IMR-90 (cell line): ENCODE measurements at regions of chr7 and their contacts with region 1.

Region 1: GRCh38 chr7:47581806-47582763 is at the start of gene TNS3:
- DNase-seq: peak; percentile 36
- ATAC-seq: peak; percentile 73
- H3K4me3 ChIP-seq: peak within 1 kb of the TSS; percentile 79
- H3K27ac ChIP-seq: peak within 1 kb of the TSS; percentile 77
- H3K4me1 ChIP-seq: peaks cover 33% of the 10 kb centered on the region
- H3K27me3 ChIP-seq: no peaks in the 10 kb centered on the region
- CTCF ChIP-seq: peak; percentile 47
- POLR2A ChIP-seq: peak; percentile 64; the same call in 1 of the 2 replicates
- RAD21 ChIP-seq: peak; percentile 34
- total RNA-seq, gene TNS3: 58.9 and 64.3 TPM in 2 replicates

Region 2: GRCh38 chr7:46802479-46802878 is 779.6 kb before region 1 on chr7:
- CTCF ChIA-PET with region 1: no interaction called
- POLR2A ChIA-PET with region 1: no interaction called
- dilution Hi-C with region 1: no loop called
- in situ Hi-C with region 1: no loop called
- intact Hi-C with region 1: no loop called
- DNase-seq: no peak
- ATAC-seq: no peak
- H3K4me3 ChIP-seq: no peak overlapping the region
- H3K27ac ChIP-seq: no peak overlapping the region
- H3K4me1 ChIP-seq: no peaks in the 10 kb centered on the region
- H3K27me3 ChIP-seq: no peaks in the 10 kb centered on the region
- CTCF ChIP-seq: no peak
- POLR2A ChIP-seq: no peak
- RAD21 ChIP-seq: no peak

Region 3: DNA sequence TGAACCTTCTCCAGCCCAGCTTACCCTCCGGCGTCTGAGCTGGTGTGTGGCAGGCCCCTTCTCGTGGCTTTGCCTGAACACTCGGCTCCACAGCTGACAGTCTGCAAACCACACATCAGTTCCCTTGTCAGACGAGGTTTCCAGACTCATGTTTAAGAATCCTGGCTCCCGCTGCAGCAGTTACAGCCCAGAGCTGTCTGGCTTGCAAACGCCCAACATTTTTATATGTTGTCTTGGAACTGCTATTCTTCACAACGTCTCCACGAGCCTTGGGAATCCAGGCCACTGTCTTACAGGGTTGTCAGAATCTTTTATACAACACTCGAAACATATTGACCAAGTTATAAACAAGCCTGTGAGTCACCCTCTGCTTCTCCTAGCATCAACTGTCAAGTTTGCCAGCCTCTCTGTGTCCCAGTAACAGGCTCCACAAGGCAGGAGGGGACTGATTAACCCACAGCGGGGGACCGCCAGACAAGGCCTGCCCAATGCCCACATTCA is 68.3 kb before region 1 on chr7:
- CTCF ChIA-PET with region 1: no interaction called
- POLR2A ChIA-PET with region 1: no interaction called
- dilution Hi-C with region 1: no loop called
- in situ Hi-C with region 1: no loop called
- intact Hi-C with region 1: loop called (anchors 2 kb)
- DNase-seq: peak; percentile 93
- ATAC-seq: peak; percentile 92
- H3K4me3 ChIP-seq: no peak overlapping the region
- H3K27ac ChIP-seq: peak overlapping the region; percentile 27
- H3K4me1 ChIP-seq: peaks cover 25% of the 10 kb centered on the region
- H3K27me3 ChIP-seq: no peaks in the 10 kb centered on the region
- CTCF ChIP-seq: no peak
- POLR2A ChIP-seq: no peak
- RAD21 ChIP-seq: peak; percentile 0

Region 4: GRCh38 chr7:47600199-47601118 is 18.4 kb after region 1 on chr7:
- CTCF ChIA-PET with region 1: no interaction called
- POLR2A ChIA-PET with region 1: interaction called, 9 read pairs
- dilution Hi-C with region 1: no loop called
- in situ Hi-C with region 1: no loop called
- intact Hi-C with region 1: loop called (anchors 2 kb)
- DNase-seq: peak; percentile 86
- ATAC-seq: peak; percentile 73
- H3K4me3 ChIP-seq: no peak overlapping the region
- H3K27ac ChIP-seq: peak overlapping the region; percentile 97
- H3K4me1 ChIP-seq: peaks cover 34% of the 10 kb centered on the region
- H3K27me3 ChIP-seq: no peaks in the 10 kb centered on the region
- CTCF ChIP-seq: no peak
- POLR2A ChIP-seq: peak; percentile 39
- RAD21 ChIP-seq: no peak

Region 5: GRCh38 chr7:47622946-47623640 is 41.0 kb after region 1 on chr7:
- CTCF ChIA-PET with region 1: no interaction called
- POLR2A ChIA-PET with region 1: no interaction called
- dilution Hi-C with region 1: no loop called
- in situ Hi-C with region 1: no loop called
- intact Hi-C with region 1: loop called (anchors 5 kb)
- DNase-seq: peak; percentile 97
- ATAC-seq: peak; percentile 96
- H3K4me3 ChIP-seq: no peak overlapping the region
- H3K27ac ChIP-seq: peak overlapping the region; percentile 87
- H3K4me1 ChIP-seq: peaks cover 18% of the 10 kb centered on the region
- H3K27me3 ChIP-seq: no peaks in the 10 kb centered on the region
- CTCF ChIP-seq: no peak
- POLR2A ChIP-seq: no peak; the same call in 1 of the 2 replicates
- RAD21 ChIP-seq: peak; percentile 29; the same call in 1 of the 2 replicates

Region 6: GRCh38 chr7:47651355-47652317 is 69.6 kb after region 1 on chr7:
- CTCF ChIA-PET with region 1: no interaction called
- POLR2A ChIA-PET with region 1: no interaction called
- dilution Hi-C with region 1: no loop called
- in situ Hi-C with region 1: no loop called
- intact Hi-C with region 1: loop called (anchors 5 kb)
- DNase-seq: peak; percentile 99
- ATAC-seq: peak; percentile 87
- H3K4me3 ChIP-seq: no peak overlapping the region
- H3K27ac ChIP-seq: peak overlapping the region; percentile 75
- H3K4me1 ChIP-seq: peaks cover 37% of the 10 kb centered on the region
- H3K27me3 ChIP-seq: no peaks in the 10 kb centered on the region; the same call in 1 of the 2 replicates
- CTCF ChIP-seq: no peak
- POLR2A ChIP-seq: 0 out of 2 replicates have a peak, but pooled peaks have one; percentile 22
- RAD21 ChIP-seq: peak; percentile 56

Region 7: DNA sequence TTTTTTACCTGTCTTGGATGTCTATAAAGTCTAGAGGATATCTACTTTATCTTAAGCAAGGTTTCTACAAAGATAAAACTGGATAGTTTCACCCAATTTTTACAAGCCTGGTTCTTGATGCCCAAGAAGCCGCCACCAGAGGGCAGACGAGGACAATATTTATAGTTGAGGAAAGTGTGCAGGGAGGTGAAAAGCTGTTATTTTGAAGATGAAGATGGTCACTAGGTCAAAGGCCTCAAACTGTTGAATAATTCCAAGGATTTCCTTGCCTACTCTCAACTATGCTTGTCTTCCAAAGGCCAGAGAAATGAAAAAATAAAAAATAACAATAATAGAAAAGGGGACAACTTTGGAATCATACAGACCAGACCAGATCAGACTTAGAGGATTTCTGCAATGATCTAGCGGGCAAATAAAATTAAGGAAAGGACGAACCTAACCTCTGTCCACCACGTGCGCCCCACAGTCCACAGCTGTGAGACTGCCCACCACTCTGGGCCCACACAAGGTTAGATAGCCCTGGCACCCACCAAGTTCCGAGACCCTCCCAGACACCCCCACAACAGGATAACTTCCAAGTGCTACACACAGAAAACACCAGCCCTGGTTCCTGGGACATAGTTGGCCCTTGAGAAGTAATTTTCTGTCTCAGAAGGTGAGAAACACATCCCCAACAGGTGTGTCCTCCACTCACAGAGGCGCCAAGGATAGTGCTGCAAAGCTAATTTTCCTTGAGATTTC is 363.3 kb after region 1 on chr7:
- CTCF ChIA-PET with region 1: no interaction called
- POLR2A ChIA-PET with region 1: no interaction called
- dilution Hi-C with region 1: no loop called
- in situ Hi-C with region 1: no loop called
- intact Hi-C with region 1: loop called (anchors 10 kb)
- DNase-seq: peak; percentile 62
- ATAC-seq: peak; percentile 22; the same call in 1 of the 2 replicates
- H3K4me3 ChIP-seq: no peak overlapping the region
- H3K27ac ChIP-seq: no peak overlapping the region
- H3K4me1 ChIP-seq: peaks cover 14% of the 10 kb centered on the region
- H3K27me3 ChIP-seq: no peaks in the 10 kb centered on the region
- CTCF ChIP-seq: peak; percentile 82
- POLR2A ChIP-seq: no peak
- RAD21 ChIP-seq: peak; percentile 72